Activated CD4-positive, alpha-beta T cell treated with anti-CD3 and anti-CD28 coated beads, Interleukin-2, amount 10 ng/mL, durations not matched to agents 24 days and 14 days (primary cell): ENCODE measurements at regions of chr3 and their contacts with region 1.

Region 1: DNA sequence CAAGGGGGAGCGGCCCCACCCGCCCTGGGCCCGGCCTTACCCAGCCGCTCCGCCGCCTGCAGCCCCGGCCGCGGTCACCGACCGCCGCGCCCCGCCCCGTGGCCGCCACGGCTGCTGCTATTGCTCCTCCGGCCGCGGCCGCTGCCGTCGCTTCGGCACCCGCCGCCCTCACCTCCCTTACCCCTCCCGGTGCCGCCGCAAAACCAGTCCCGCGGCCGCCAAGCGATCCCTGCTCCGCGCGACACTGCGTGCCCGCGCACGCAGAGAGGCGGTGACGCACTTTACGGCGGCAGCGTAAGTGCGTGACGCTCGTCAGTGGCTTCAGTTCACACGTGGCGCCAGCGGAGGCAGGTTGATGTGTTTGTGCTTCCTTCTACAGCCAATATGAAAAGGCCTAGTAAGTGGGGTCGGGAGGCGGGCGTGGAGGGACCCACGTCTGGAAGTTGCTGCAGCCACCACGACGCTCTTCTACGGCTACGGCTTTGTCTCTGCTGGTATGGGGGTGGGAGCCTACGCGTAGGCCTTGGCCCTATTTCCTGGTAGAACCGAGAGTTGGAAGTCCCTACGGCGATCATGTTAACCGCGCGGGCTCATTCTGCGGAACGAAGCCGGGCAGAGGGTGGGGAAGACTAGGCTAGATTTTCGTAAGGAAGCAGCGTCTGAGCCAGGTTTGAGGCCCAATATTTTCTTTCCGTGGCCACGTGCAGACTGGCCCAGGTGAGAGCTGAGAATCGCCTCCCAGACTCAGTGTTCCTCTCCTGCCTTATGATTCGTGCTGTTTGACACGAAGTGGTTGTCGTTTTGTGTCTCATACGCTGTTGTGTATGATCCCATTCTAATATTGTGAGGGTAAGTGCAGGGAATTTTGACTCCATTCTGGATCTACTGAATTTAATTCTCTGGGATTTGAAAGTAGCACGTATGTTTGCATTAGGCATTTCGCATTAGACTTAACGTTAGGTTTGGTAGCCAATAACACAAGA is at the starts of genes GNL3 and PBRM1:
- DNase-seq: peak; percentile 98
- H3K4me3 Mint-ChIP-seq: peak within 1 kb of the TSS; percentile 96
- H3K27ac Mint-ChIP-seq: peak within 1 kb of the TSS; percentile 99
- H3K4me1 Mint-ChIP-seq: peaks cover 57% of the 10 kb centered on the region
- H3K27me3 Mint-ChIP-seq: peaks cover 1% of the 10 kb centered on the region
- total RNA-seq, gene GNL3: 254 and 267 TPM in 2 replicates
- total RNA-seq, gene PBRM1: 65.7 and 67.8 TPM in 2 replicates

Region 2: DNA sequence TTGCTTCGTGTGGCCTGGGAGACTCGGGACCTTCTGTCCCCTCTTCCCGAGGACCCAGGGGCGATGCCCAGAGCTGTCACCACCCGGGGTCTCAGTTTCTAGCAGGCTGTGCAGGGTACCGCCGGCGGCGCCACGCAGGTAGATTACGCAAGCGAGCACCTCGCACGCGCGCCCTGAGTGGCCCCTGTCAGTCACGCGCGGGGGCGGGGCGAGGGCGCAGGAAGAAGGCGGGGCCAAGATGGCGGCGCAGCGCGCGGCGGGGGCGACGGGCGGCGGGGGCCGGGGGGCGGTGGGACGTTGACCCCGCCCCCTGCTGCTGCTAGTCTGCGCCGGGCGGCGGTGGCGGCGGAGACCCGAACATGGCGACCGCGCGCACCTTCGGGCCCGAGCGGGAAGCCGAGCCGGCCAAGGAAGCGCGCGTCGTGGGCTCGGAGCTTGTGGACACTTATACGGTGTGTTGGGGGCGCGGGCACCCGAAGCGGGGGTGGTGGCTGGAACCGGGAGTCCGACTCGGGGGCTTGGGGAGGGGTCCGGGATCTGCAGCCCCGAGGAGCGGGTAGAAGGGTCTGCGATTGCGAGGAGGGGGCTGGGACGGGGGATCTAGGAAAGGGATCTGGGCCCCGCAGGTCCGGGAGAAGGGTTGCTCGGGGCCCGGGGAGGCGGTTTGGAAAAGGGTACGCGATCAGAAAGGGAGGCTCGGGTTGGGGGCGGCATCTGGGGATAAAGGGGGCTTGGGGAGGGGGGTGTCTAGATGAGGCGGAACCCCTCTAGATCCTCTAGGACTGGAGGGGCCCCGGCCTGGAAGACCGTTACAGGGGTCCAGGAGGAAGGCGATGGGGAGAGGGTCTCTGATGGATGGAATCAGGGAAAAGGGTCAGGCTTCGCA is 230.5 kb before region 1 on chr3 and contains the start of gene NISCH:
- intact Hi-C with region 1: loop called (anchors 10 kb)
- DNase-seq: peak; percentile 100
- H3K4me3 Mint-ChIP-seq: peak within 1 kb of the TSS; percentile 99
- H3K27ac Mint-ChIP-seq: peak within 1 kb of the TSS; percentile 89
- H3K4me1 Mint-ChIP-seq: peaks cover 28% of the 10 kb centered on the region
- H3K27me3 Mint-ChIP-seq: no peaks in the 10 kb centered on the region
- total RNA-seq, gene NISCH: 72.6 and 75.5 TPM in 2 replicates

Region 3: DNA sequence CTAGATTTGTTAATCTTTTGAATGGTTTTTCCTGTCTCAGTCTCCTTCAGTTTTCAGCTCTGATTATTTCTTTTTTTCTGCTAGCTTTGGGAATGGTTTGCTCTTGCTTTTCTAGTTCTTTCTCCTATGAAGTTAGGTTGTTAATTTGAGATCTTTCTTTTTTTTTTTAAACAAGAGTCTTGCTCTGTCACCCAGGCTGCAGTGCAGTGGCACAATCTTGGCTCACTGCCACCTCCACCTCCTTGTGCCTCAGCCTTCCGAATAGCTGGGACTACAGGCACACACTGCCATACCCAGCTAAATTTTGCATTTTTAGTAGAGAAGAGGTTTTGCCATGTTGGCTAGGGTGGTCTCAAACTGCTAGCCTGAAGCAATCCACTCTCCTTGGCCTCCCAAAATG is 92.9 kb before region 1 on chr3:
- intact Hi-C with region 1: no loop called
- DNase-seq: no peak
- H3K4me3 Mint-ChIP-seq: no peak overlapping the region
- H3K27ac Mint-ChIP-seq: no peak overlapping the region
- H3K4me1 Mint-ChIP-seq: no peaks in the 10 kb centered on the region
- H3K27me3 Mint-ChIP-seq: no peaks in the 10 kb centered on the region

Region 4: DNA sequence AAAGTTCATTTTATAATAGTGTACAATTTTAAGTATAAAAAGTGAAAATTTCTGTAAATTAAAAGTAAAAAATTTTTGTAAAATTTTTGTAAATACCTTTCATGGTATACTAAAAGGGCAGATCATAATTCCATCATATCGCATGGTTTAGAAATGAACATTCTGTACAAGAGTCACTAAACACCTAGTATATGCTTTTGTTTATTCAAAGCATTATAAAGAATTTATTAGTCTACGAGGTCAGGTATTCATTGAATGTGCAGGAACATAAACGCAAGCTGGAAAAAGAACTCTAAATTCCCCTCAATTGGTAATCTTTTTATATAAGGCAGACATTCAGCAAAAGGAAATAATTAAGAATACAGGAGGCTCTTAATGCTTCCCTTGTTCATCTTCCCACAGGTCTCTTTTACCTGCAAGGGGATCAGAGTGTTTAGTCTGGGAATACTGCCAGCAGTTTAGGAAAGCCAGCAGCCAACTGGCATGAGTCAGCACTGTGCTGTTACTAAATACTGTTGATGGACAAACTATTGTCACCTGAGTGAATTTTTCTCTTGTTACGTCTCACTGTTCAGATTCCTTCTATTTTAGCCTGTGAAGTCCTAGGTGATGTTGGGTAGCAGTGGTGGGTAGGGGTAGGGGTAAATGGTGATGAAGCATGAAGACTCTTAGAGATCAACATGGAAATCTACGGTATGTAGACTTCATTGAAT is 79.5 kb before region 1 on chr3:
- intact Hi-C with region 1: no loop called
- DNase-seq: peak; percentile 38
- H3K4me3 Mint-ChIP-seq: no peak overlapping the region
- H3K27ac Mint-ChIP-seq: no peak overlapping the region
- H3K4me1 Mint-ChIP-seq: peaks cover 6% of the 10 kb centered on the region
- H3K27me3 Mint-ChIP-seq: no peaks in the 10 kb centered on the region

Region 5: GRCh38 chr3:52623234-52623792 is 62.7 kb before region 1 on chr3:
- intact Hi-C with region 1: loop called (anchors 5 kb)
- DNase-seq: no peak
- H3K4me3 Mint-ChIP-seq: no peak overlapping the region
- H3K27ac Mint-ChIP-seq: no peak overlapping the region
- H3K4me1 Mint-ChIP-seq: peaks cover 10% of the 10 kb centered on the region
- H3K27me3 Mint-ChIP-seq: no peaks in the 10 kb centered on the region

Region 6: GRCh38 chr3:52705688-52706686 is 20.0 kb after region 1 on chr3 and contains the starts of genes GLT8D1 and SPCS1:
- intact Hi-C with region 1: loop called (anchors 1 kb)
- DNase-seq: peak; percentile 96
- H3K4me3 Mint-ChIP-seq: peak within 1 kb of the TSS; percentile 94
- H3K27ac Mint-ChIP-seq: peak within 1 kb of the TSS; percentile 95
- H3K4me1 Mint-ChIP-seq: peaks cover 22% of the 10 kb centered on the region
- H3K27me3 Mint-ChIP-seq: no peaks in the 10 kb centered on the region
- total RNA-seq, gene GLT8D1: 38.7 and 39.0 TPM in 2 replicates
- total RNA-seq, gene SPCS1: 134 and 135 TPM in 2 replicates

Region 7: DNA sequence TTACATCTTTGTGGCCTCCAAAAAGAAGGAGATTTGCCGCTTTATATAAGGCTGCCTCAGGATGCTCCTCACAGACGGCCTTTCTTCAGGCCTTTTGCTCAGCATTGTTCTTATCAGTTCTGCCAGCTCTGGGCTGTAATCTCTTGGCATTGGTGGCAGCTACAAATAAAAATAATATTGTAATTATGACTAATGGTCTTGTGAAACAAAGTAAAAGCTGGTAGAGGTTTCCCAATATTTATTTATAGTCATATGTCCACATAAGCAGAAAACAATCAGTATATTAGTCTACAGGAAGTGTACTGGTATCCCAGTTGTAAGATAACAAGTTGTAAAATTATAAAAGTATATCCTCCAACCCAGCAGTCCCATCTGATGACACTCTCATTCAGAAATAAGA is 77.5 kb after region 1 on chr3:
- intact Hi-C with region 1: no loop called
- DNase-seq: no peak
- H3K4me3 Mint-ChIP-seq: no peak overlapping the region
- H3K27ac Mint-ChIP-seq: no peak overlapping the region
- H3K4me1 Mint-ChIP-seq: no peaks in the 10 kb centered on the region
- H3K27me3 Mint-ChIP-seq: no peaks in the 10 kb centered on the region